PC-3 (cell line): ENCODE measurements at regions of chr11 and their contacts with region 1.

Region 1: GRCh38 chr11:121670266-121670665 is 217.5 kb upstream of the SORL1-AS1 start:
- DNase-seq: no peak
- ATAC-seq: no peak
- H3K4me3 ChIP-seq: no peak overlapping the region
- H3K27ac ChIP-seq: no peak overlapping the region
- H3K4me1 ChIP-seq: peaks cover 11% of the 10 kb centered on the region; the same call in 1 of the 2 replicates
- H3K27me3 ChIP-seq: no peaks in the 10 kb centered on the region
- CTCF ChIP-seq: no peak

Region 2: GRCh38 chr11:121608545-121609098 is 61.6 kb before region 1 on chr11:
- CTCF ChIA-PET with region 1: interaction called, 13 read pairs
- POLR2A ChIA-PET with region 1: no interaction called
- intact Hi-C with region 1: no loop called
- DNase-seq: no peak
- ATAC-seq: no peak
- H3K4me3 ChIP-seq: no peak overlapping the region
- H3K27ac ChIP-seq: no peak overlapping the region
- H3K4me1 ChIP-seq: 0 out of 2 replicates have a peak, but pooled peaks cover under 1% of the 10 kb centered on the region
- H3K27me3 ChIP-seq: no peaks in the 10 kb centered on the region
- CTCF ChIP-seq: no peak